GM10248 (cell line): ENCODE measurements at regions of chr22 and their contacts with region 1.

Region 1: GRCh38 chr22:24106385-24107381 is 74.6 kb upstream of the SUSD2 start:
- DNase-seq: peak; percentile 38
- CTCF ChIP-seq: peak; percentile 36

Region 2: GRCh38 chr22:24088816-24089215 is 17.9 kb before region 1 on chr22:
- CTCF ChIA-PET with region 1: interaction called, 12 read pairs
- POLR2A ChIA-PET with region 1: no interaction called
- DNase-seq: no peak
- CTCF ChIP-seq: no peak

Region 3: DNA sequence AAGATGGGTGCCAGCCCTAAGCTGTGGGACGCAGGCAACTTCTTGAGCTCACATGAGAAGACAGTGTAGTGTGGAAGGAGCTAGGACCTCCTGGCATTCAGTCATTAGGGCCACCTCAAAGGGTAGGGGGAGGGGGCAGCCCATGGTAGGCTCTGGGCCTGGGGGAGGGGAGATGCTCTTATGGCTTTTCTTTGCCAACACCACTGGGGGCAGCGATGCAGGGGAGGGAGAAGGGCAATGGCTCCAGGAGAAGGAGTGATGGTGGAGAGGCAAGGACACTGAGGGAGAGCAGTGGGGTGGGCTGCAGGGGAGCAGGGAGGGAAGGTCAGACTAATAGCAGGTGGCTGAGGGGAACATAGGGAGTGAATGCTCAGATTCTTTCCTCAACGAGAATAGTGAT is 11.3 kb after region 1 on chr22:
- CTCF ChIA-PET with region 1: interaction called, 10 read pairs
- POLR2A ChIA-PET with region 1: interaction called, 3 read pairs
- DNase-seq: no peak
- CTCF ChIP-seq: no peak

Region 4: GRCh38 chr22:24175160-24175808 is 68.6 kb after region 1 on chr22:
- CTCF ChIA-PET with region 1: interaction called, 10 read pairs
- POLR2A ChIA-PET with region 1: no interaction called
- DNase-seq: peak; percentile 77
- CTCF ChIP-seq: peak; percentile 85